ENCODE measurements at regions of chr17 and their contacts with region 1.

Region 1: DNA sequence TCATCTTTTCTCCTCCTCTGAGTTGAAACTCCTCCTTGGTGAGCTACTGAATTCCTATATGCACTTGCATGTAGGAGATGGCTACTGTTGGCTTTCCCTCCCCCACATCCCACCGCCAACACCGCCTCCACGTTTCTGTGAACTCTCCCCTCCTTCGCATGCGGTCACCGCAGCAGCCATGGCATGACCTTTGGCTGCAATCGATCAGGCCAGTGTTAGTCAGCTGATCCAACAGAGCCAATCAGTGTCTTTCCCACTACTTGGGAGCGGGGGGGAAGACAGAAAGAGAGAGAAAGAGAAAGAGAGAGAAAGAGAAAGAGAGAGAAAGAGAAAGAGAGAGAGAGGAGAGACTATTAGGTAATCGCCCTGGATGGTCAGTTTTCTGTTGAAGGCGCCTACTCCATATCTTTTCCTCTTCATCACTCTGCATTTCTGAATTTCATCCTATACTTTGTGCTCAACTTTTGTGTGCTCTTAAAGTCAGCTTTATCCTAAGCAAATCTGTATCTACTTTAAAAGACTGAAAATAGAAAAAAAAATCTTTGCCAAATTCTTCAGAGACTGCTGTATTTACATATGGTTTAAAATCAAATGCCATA is 22.7 kb downstream of the ASGR1 start:
- DNase-seq: no peak
- ATAC-seq: no peak
- H3K4me3 ChIP-seq: no peak overlapping the region
- H3K27ac ChIP-seq: no peak overlapping the region
- H3K4me1 ChIP-seq: no peaks in the 10 kb centered on the region
- H3K27me3 ChIP-seq: no peaks in the 10 kb centered on the region
- CTCF ChIP-seq: no peak

Region 2: GRCh38 chr17:6927290-6928126 is 228.9 kb before region 1 on chr17:
- CTCF ChIA-PET with region 1: no interaction called
- POLR2A ChIA-PET with region 1: no interaction called
- in situ Hi-C with region 1: no loop called
- intact Hi-C with region 1: no loop called
- DNase-seq: no peak
- ATAC-seq: no peak
- H3K4me3 ChIP-seq: no peak overlapping the region
- H3K27ac ChIP-seq: no peak overlapping the region
- H3K4me1 ChIP-seq: no peaks in the 10 kb centered on the region
- H3K27me3 ChIP-seq: no peaks in the 10 kb centered on the region
- CTCF ChIP-seq: no peak

Region 3: DNA sequence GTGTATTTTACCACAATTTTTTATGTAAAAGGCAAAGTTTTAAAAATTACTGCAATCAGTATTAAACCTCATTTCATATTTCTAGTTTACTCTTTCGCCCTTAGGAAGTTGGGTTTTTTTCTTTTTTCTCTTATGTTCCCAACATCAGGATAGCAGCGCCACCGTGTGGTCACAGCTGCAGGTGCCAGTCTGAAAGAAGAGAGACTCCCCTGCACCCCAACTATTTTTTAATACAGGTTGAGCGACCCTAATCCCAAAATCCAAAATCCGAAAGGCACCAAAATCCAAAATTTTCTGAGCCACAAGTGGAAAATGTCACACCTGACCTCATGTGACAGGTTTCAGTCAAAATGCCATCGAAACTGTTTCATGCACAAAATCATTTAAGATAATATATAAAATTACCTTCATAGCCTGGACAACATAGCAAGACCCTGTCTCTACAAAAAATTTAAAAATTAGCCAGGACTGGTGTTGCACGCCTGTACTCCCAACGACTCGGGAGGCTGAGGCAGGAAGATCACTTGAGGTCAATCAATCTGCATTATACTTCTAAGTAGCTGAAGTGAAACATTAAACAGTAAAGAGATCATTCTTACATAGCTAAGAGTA is 20.1 kb before region 1 on chr17:
- CTCF ChIA-PET with region 1: interaction called, 16 read pairs
- POLR2A ChIA-PET with region 1: no interaction called
- in situ Hi-C with region 1: no loop called
- intact Hi-C with region 1: no loop called
- DNase-seq: peak; percentile 61
- ATAC-seq: no peak
- H3K4me3 ChIP-seq: peak overlapping the region; percentile 21 to 43
- H3K27ac ChIP-seq: no peak overlapping the region
- H3K4me1 ChIP-seq: no peaks in the 10 kb centered on the region; the same call in 1 of the 2 replicates
- H3K27me3 ChIP-seq: no peaks in the 10 kb centered on the region
- CTCF ChIP-seq: peak; percentile 90

Measured in Panc1 (cell line).